ENCODE measurements at regions of chr3 and their contacts with region 1.

Region 1: GRCh38 chr3:149339931-149340309 is 6.5 kb upstream of the TM4SF18 start:
- DNase-seq: peak; percentile 92 to 94
- ATAC-seq: peak; percentile 95
- H3K4me3 ChIP-seq: no peak overlapping the region
- H3K27ac ChIP-seq: peak overlapping the region; percentile 80 to 95
- H3K4me1 ChIP-seq: peaks cover 2 to 6% of the 10 kb centered on the region in 2 donors
- H3K27me3 ChIP-seq: no peaks in the 10 kb centered on the region

Region 2: GRCh38 chr3:149299938-149300791 is 39.8 kb before region 1 on chr3:
- intact Hi-C with region 1: loop called in 1 of 2 experiments (anchors 5 kb)
- DNase-seq: no peak
- ATAC-seq: peak; percentile 87
- H3K4me3 ChIP-seq: no peak overlapping the region
- H3K27ac ChIP-seq: peak overlapping the region; percentile 78 to 79
- H3K4me1 ChIP-seq: peaks cover 0 to 2% of the 10 kb centered on the region in 2 donors
- H3K27me3 ChIP-seq: no peaks in the 10 kb centered on the region

Region 3: DNA sequence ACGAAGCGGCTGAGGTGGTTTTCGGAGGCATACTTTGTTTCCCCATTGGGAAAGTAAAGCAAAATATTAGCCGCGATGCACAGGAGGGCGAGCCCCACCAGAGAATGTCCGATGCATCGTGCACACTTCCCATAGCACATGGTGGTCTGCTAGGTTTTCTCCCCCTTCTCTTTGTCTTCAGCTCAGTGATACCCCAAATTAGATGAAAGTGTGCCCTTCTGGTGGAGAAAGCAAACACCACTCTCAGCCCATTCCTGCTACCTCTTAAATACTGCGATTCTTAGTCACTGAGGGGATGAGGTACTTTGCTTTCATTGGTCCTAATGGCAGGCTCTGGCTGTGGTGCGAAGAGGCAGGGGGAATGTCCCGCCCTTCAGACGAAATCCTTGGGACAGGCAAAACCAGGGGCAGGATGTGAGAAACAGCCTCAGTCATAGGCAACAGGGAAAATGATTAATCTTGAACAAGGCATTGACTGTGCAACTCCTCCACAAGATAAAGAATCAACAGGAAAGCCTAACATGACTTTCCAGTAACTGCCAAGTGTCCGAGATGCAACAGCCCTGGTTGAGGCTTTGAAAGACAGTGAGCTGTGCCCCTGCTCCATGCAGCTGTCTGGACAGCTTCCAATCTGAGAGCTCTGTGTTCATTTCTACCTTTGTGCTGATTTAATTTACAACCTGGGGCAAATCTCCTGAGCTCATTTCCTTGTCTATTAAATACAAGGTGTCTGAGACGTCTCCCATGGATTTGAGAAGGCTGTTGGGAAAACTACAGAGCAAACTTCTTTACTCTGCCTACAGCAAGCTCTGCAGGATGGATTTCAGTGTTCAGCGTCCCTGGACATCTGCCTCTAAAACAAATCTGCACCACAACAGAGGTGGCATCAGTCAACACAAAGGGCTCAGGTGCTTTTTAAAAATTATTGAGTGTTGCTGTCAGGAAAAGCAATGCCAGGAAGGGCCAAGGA is 37.8 kb after region 1 on chr3 and contains the start of gene TM4SF1:
- intact Hi-C with region 1: loop called in 1 of 2 experiments (anchors 5 kb)
- DNase-seq: peak; percentile 84 to 85
- ATAC-seq: peak; percentile 83
- H3K4me3 ChIP-seq: peak within 1 kb of the TSS; percentile 83 to 99
- H3K27ac ChIP-seq: peak within 1 kb of the TSS; percentile 82 to 98
- H3K4me1 ChIP-seq: peaks cover 5 to 6% of the 10 kb centered on the region in 2 donors
- H3K27me3 ChIP-seq: no peaks in the 10 kb centered on the region
- total RNA-seq, gene TM4SF1: 213 TPM

Measured in aorta (tissue), 5 donors.